BJ (cell line): ENCODE measurements at regions of chr1 and their contacts with region 1.

Region 1: GRCh38 chr1:85884372-85885035 is 176.3 kb upstream of the ZNHIT6 start:
- DNase-seq: no peak
- H3K4me3 ChIP-seq: no peak overlapping the region
- H3K27me3 ChIP-seq: no peaks in the 10 kb centered on the region
- CTCF ChIP-seq: peak; percentile 72

Region 2: DNA sequence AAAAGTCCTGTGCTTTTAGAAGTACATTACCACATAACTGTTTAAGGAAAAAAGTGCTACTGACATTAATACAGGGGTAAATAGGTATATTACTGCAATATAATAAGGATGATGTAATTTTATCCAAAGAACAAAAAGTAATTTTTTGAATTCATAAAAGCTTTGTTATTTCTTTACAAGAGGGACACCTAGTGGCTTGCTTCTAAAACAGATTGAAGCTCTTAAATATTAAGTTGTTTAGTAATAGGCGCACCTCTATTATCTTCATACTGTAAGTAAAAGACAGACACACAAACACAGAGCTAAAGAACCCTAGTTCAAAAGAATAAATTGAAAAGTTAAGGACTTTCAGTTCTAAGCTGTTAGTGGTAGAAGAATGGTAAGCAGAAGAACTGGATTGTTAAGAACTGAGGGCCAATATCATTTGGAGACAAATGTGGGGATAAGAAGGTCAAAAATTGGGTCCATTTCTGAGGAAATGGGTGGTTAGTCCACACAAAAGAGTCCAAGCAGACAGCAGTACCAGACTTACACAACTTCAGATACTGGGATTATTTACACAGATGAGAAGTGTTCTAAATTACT is 191.7 kb before region 1 on chr1:
- CTCF ChIA-PET with region 1: interaction called, 10 read pairs
- POLR2A ChIA-PET with region 1: no interaction called
- DNase-seq: peak; percentile 28
- H3K4me3 ChIP-seq: no peak overlapping the region
- H3K27me3 ChIP-seq: no peaks in the 10 kb centered on the region
- CTCF ChIP-seq: peak; percentile 43

Region 3: DNA sequence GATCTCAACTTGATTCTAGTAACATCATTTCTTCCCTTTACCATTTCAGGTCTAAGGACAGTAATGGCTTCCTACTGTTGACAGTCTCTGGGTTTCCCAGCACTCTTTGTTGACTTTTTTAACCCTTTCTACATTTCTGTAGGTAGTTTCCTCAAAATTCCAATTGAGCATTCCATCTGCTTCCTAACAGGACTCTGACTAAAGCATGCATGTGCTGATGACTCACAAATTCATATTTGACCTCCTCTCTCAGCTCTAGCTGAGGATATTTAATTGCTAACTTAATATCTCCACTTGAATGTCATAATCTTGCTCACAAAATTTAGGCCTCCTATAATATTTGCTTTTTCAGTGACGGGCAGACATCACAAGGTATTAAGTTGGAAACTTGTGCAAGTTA is 83.0 kb before region 1 on chr1:
- CTCF ChIA-PET with region 1: no interaction called
- POLR2A ChIA-PET with region 1: no interaction called
- DNase-seq: no peak
- H3K4me3 ChIP-seq: no peak overlapping the region
- H3K27me3 ChIP-seq: no peaks in the 10 kb centered on the region
- CTCF ChIP-seq: no peak

Region 4: GRCh38 chr1:85911742-85912141 is 27.2 kb after region 1 on chr1:
- CTCF ChIA-PET with region 1: no interaction called
- POLR2A ChIA-PET with region 1: no interaction called
- DNase-seq: no peak
- H3K4me3 ChIP-seq: no peak overlapping the region
- H3K27me3 ChIP-seq: no peaks in the 10 kb centered on the region
- CTCF ChIP-seq: peak; percentile 47

Region 5: DNA sequence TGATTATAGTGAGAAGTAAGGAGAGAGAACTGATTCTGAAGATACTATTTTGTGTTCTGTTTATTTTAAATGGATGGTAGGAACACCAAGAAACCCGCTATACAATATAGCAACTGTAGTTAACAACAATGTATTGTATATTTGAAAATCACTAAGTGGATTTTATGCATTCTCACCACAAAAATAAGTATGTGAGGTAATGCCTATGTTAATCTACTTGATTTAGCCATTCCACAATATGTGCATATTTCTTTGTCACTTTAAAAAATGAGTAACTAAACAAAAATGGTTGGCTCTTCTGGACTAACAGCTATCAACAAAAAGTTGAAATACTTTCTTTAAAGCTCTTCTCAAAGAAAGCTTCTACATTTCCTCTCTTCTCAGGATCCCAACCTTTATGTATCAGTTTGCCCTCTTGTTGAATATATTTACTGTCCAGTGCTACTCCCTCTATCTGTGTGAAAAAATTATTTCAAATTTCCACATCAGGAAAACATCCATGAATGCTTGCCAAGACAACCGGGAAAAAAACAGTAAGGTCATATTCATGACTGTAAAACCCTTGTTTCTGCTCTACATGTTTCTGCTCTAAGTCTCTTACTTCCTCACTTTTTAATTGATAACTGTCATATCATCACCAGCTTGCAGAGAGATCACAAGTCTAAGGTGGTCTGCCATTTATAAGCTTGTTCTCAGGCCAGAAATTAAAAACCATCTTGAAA is 689.4 kb after region 1 on chr1:
- CTCF ChIA-PET with region 1: no interaction called
- POLR2A ChIA-PET with region 1: no interaction called
- DNase-seq: no peak
- H3K4me3 ChIP-seq: no peak overlapping the region
- H3K27me3 ChIP-seq: no peaks in the 10 kb centered on the region
- CTCF ChIP-seq: no peak